PC-3 (cell line): ENCODE measurements at regions of chr19 and their contacts with region 1.

Region 1: DNA sequence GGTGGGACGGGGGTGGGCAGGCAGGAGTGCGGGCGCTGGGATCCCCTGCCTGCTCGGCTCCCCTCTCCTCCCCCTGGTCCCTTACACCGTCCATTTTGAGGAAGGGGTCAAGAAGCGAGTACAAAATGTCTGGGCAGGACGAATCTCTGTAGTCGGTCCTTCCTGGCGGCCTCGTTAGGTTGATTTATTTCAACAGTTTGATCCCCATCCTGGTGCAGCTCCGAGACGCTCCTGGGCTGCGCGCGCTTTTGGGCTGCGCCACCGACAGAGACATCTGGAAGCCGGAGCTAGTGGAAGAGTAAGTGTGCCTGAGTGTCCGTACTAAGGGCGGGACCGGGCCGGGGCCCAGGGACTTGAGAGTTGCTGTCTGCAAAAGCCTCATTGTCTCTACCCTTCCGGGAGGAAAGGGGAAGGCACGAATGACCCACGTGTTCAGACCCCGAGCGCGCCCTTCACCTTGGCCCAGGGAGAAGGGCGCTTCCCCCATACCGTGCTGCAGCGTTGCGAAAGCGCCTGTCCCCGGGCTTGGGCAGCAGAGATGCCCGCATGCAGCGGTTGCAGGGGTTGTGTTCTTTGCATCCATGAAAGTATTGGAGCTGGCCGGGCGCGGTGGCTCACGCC is 1.8 kb downstream of the ZNF114 start:
- DNase-seq: peak; percentile 23
- ATAC-seq: peak; percentile 53
- H3K4me3 ChIP-seq: peak overlapping the region; percentile 67
- H3K27ac ChIP-seq: no peak overlapping the region
- H3K4me1 ChIP-seq: peaks cover 13% of the 10 kb centered on the region
- H3K27me3 ChIP-seq: no peaks in the 10 kb centered on the region
- CTCF ChIP-seq: no peak

Region 2: GRCh38 chr19:48190288-48190884 is 81.3 kb before region 1 on chr19:
- CTCF ChIA-PET with region 1: no interaction called
- POLR2A ChIA-PET with region 1: no interaction called
- intact Hi-C with region 1: no loop called
- DNase-seq: peak; percentile 97
- ATAC-seq: peak; percentile 97
- H3K4me3 ChIP-seq: no peak overlapping the region
- H3K27ac ChIP-seq: peak overlapping the region; percentile 34; the same call in 1 of the 2 replicates
- H3K4me1 ChIP-seq: peaks cover 11% of the 10 kb centered on the region
- H3K27me3 ChIP-seq: no peaks in the 10 kb centered on the region
- CTCF ChIP-seq: peak; percentile 62

Region 3: GRCh38 chr19:48290771-48291488 is 19.3 kb after region 1 on chr19:
- CTCF ChIA-PET with region 1: interaction called, 3 read pairs
- POLR2A ChIA-PET with region 1: no interaction called
- intact Hi-C with region 1: loop called (anchors 1 kb)
- DNase-seq: peak; percentile 78
- ATAC-seq: peak; percentile 75
- H3K4me3 ChIP-seq: peak overlapping the region; percentile 63
- H3K27ac ChIP-seq: no peak overlapping the region
- H3K4me1 ChIP-seq: peaks cover 5% of the 10 kb centered on the region
- H3K27me3 ChIP-seq: no peaks in the 10 kb centered on the region
- CTCF ChIP-seq: peak; percentile 86

Region 4: DNA sequence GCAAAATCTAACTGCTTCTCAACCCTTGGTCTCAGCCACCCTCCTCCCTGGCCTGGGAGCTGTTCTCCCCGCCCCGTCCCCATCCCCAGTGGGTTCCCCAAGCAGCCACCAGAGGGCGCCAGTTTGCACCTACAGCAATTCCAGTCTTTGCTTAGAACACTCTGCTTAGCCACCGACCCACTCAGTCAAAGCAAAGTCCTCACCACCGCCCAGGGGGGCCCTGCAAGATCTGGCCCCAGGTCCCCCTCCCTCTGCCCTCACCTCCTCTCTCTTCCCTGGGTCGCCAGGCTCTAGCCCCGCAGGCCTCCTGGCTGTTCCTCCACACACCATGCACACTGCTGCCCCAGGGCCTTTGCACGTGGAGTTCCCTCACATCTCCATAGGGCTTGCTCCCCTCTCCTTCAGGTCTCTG is 79.7 kb after region 1 on chr19:
- CTCF ChIA-PET with region 1: no interaction called
- POLR2A ChIA-PET with region 1: no interaction called
- intact Hi-C with region 1: no loop called
- DNase-seq: peak; percentile 67
- ATAC-seq: peak; percentile 70
- H3K4me3 ChIP-seq: no peak overlapping the region
- H3K27ac ChIP-seq: no peak overlapping the region
- H3K4me1 ChIP-seq: no peaks in the 10 kb centered on the region
- H3K27me3 ChIP-seq: no peaks in the 10 kb centered on the region
- CTCF ChIP-seq: peak; percentile 77